ENCODE measurements at regions of chr10 and their contacts with region 1.

Region 1: GRCh38 chr10:36188080-36188453 is 546.0 kb upstream of the FZD8 start:
- DNase-seq: peak; percentile 22 to 62
- ATAC-seq: peak; percentile 77 to 91 (median 82)
- H3K4me3 ChIP-seq: no peak overlapping the region
- H3K27ac ChIP-seq: peak overlapping the region; percentile 8 to 83 (median 54)
- H3K4me1 ChIP-seq: peaks cover 0 to 25% (median 5%) of the 10 kb centered on the region in 9 donors
- H3K27me3 ChIP-seq: no peaks in the 10 kb centered on the region
- CTCF ChIP-seq: no peak

Region 2: GRCh38 chr10:35822316-35822715 is 365.8 kb before region 1 on chr10:
- intact Hi-C with region 1: loop called in 1 of 10 experiments (anchors 5 kb)
- DNase-seq: peak; percentile 67 to 86
- ATAC-seq: peak; percentile 92 to 99 (median 96)
- H3K4me3 ChIP-seq: no peak overlapping the region
- H3K27ac ChIP-seq: peak overlapping the region in 1 of 10 donors; percentile 45
- H3K4me1 ChIP-seq: peaks cover 0 to 17% (median 12%) of the 10 kb centered on the region in 9 donors
- H3K27me3 ChIP-seq: no peaks in the 10 kb centered on the region
- CTCF ChIP-seq: peak in 6 of 9 donors; percentile 9 to 55 (median 41)

Region 3: GRCh38 chr10:36141856-36142560 is 46.1 kb before region 1 on chr10:
- intact Hi-C with region 1: no loop called
- DNase-seq: peak in 1 of 2 donors; percentile 8
- ATAC-seq: peak in 7 of 8 donors; percentile 33 to 78 (median 52)
- H3K4me3 ChIP-seq: peak overlapping the region in 5 of 10 donors; percentile 12 to 27 (median 18)
- H3K27ac ChIP-seq: peak overlapping the region in 7 of 10 donors; percentile 5 to 66 (median 57)
- H3K4me1 ChIP-seq: peaks cover 0 to 16% (median 0%) of the 10 kb centered on the region in 9 donors
- H3K27me3 ChIP-seq: no peaks in the 10 kb centered on the region
- CTCF ChIP-seq: no peak

Region 4: GRCh38 chr10:36236931-36237330 is 48.9 kb after region 1 on chr10:
- intact Hi-C with region 1: no loop called
- DNase-seq: no peak
- ATAC-seq: no peak
- H3K4me3 ChIP-seq: no peak overlapping the region
- H3K27ac ChIP-seq: no peak overlapping the region
- H3K4me1 ChIP-seq: no peaks in the 10 kb centered on the region
- H3K27me3 ChIP-seq: no peaks in the 10 kb centered on the region
- CTCF ChIP-seq: no peak